Mammary epithelial cell (primary cell): ENCODE measurements at regions of chr3 and their contacts with region 1.

Region 1: GRCh38 chr3:185659942-185660921 is 74.1 kb downstream of the SENP2 start:
- DNase-seq: peak; percentile 62
- H3K4me3 ChIP-seq: no peak overlapping the region
- H3K27ac ChIP-seq: peak overlapping the region; percentile 48
- H3K4me1 ChIP-seq: peaks cover 60% of the 10 kb centered on the region
- H3K27me3 ChIP-seq: no peaks in the 10 kb centered on the region
- CTCF ChIP-seq: peak; percentile 98 to 99

Region 2: GRCh38 chr3:185089343-185089742 is 570.9 kb before region 1 on chr3:
- CTCF ChIA-PET with region 1: no interaction called
- dilution Hi-C with region 1: no loop called
- in situ Hi-C with region 1: no loop called
- intact Hi-C with region 1: no loop called
- DNase-seq: no peak
- H3K4me3 ChIP-seq: no peak overlapping the region
- H3K27ac ChIP-seq: no peak overlapping the region
- H3K4me1 ChIP-seq: no peaks in the 10 kb centered on the region
- H3K27me3 ChIP-seq: peaks cover 3% of the 10 kb centered on the region
- CTCF ChIP-seq: no peak

Region 3: DNA sequence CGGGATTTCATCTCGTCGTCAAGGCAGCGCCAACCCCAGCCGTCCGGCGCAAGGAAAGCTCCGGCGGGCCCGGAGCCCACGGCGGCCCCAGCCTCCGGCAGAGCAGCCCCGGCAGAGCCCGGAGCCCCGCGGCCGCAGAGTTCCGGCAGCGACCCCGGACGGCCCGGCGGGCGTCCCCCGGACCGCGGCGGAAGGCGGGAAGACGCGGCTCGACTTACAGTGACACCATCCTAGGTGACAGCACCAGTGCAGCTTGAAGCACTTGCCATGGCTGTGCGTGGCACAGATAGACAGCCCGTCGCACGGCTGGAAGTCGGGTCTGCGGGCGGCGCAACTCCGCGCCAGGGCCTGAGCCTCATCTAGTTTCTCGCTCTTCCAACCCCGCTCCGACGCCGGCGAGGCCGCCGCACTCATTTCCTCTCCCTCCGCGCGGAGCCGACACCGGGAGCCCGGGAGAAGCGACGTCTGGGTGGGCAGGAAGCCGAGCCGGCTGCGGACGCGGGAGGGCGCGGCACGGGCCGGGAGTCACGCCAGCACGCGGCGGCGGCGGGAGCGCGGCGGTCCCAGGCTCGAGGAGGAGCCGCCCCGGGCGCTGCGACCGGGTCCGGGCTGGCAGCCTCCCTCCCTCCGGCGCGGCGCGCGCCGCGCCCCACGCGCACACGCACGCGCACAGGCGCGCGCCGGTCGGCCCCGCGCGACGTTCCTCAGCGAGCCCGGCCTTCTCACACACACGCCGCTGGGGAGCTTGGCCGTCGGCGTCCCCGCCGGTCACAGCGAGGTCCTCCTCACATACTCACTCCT is 507.6 kb before region 1 on chr3 and contains the start of gene C3orf70:
- CTCF ChIA-PET with region 1: no interaction called
- dilution Hi-C with region 1: no loop called
- in situ Hi-C with region 1: no loop called
- intact Hi-C with region 1: no loop called
- DNase-seq: peak; percentile 25
- H3K4me3 ChIP-seq: peak within 1 kb of the TSS; percentile 18 to 58 (median 32)
- H3K27ac ChIP-seq: no peak within 1 kb of the TSS
- H3K4me1 ChIP-seq: peaks cover 11% of the 10 kb centered on the region
- H3K27me3 ChIP-seq: peaks cover 50% of the 10 kb centered on the region
- CTCF ChIP-seq: no peak
- total RNA-seq, gene C3orf70: under 0.01 to 0.05 TPM

Region 4: GRCh38 chr3:185613016-185613415 is 47.2 kb before region 1 on chr3:
- CTCF ChIA-PET with region 1: no interaction called
- dilution Hi-C with region 1: no loop called
- in situ Hi-C with region 1: no loop called
- intact Hi-C with region 1: no loop called
- DNase-seq: no peak
- H3K4me3 ChIP-seq: no peak overlapping the region
- H3K27ac ChIP-seq: no peak overlapping the region
- H3K4me1 ChIP-seq: no peaks in the 10 kb centered on the region
- H3K27me3 ChIP-seq: no peaks in the 10 kb centered on the region
- CTCF ChIP-seq: no peak

Region 5: DNA sequence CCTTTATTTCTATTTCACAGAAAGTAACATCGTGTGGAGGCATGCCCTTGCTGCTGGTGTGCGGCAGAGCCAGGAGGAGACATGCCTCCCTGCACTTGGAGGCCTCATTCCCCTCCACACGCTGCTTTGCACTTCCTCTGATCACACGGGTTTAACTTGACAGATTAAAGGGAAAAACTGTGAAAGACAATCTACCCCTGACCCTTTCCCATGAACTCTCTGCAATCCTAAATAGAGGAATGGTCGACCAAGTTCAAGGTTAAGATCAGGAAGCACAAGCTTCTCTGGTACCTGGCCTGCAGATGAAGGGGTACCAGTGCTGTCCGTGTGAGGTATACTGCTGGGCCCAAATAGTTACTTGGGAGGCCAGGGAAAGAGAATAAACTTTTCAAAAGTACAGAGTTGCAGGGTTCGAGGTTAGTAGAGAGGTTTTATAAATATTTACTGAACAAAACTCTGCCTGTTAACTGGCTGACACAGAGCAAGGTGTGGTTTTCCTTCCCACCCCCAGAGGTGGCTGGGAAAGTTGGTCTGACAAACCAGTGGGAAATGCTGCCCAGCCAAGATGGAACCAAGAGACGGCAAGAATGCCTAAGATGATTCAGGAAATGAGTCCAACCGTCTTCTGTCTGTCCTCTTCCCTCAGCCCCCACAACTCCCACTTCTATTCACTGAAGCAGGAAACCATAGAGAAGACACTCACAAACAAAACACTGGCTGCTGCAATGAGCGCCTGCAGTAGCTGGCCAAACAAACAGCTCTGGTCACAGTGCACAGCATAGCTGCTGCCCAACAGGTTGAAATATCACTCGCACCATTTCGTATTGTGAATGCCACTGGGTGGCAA is 85.0 kb after region 1 on chr3:
- CTCF ChIA-PET with region 1: no interaction called
- dilution Hi-C with region 1: no loop called
- in situ Hi-C with region 1: no loop called
- intact Hi-C with region 1: no loop called
- DNase-seq: peak; percentile 96
- H3K4me3 ChIP-seq: no peak overlapping the region
- H3K27ac ChIP-seq: peak overlapping the region; percentile 91
- H3K4me1 ChIP-seq: peaks cover 38% of the 10 kb centered on the region
- H3K27me3 ChIP-seq: no peaks in the 10 kb centered on the region
- CTCF ChIP-seq: peak in 1 of 2 donors; percentile 1

Region 6: DNA sequence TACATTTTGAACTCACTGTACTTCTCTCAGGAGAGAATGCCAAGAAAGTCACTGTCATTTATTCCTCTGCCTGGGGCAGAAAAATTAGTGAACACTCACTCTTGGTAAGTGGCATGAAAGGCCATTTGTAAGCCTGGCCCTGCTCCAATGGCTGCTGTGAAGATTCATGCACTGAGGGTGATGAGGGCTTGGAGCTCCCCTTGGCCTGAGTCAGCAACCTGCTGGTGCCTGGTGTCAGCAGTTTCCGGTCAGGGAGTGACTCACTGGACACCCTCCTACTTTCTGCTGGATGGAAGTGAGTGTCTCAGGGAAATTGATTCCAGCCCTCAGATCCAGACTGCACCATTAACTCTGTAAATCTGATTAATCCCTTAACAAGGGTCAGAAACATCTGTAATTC is 240.0 kb after region 1 on chr3:
- CTCF ChIA-PET with region 1: no interaction called
- dilution Hi-C with region 1: no loop called
- in situ Hi-C with region 1: loop called in 1 of 2 experiments (anchors 25 kb)
- intact Hi-C with region 1: loop called (anchors 1 kb)
- DNase-seq: peak; percentile 98
- H3K4me3 ChIP-seq: no peak overlapping the region
- H3K27ac ChIP-seq: no peak overlapping the region
- H3K4me1 ChIP-seq: peaks cover 10% of the 10 kb centered on the region
- H3K27me3 ChIP-seq: no peaks in the 10 kb centered on the region
- CTCF ChIP-seq: no peak

Region 7: DNA sequence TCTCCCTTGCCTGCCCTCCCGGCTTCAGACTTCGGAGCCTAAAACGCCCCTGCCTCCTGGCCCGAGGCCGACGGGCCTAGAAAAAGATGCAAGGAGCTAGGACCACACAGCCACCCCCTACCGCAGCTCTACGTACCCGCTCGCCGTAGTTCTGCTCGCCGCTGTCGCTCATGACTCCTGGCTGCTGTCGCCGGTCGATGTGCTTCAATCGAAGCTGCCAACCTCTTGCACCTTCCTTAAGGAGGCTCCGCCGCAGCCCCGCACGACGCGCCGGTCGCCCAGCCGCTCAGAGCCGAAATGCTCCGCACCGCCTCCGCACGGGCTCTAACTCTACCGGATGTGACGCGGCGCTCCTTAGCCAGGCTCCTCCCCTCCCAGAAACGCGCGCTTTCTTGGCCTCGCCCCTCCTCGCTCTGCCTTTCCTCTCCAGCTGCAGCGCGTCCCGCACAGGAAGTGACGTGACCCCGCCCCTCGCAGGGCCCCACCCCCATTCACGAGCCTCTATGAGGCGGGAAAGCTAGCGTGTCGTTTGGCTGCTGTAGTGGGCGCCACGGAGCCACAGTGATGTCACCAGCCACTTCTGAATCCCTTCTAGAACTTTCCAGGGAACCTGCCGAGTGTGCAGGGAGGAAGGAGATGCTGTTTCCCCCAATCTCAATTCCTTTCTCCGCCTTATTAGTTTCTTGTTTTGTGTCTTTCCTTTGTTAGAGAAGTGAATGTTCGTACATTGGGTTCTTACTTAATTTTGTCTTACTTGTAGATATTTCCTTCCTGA is 277.6 kb after region 1 on chr3 and contains the start of gene TRA2B:
- CTCF ChIA-PET with region 1: no interaction called
- dilution Hi-C with region 1: no loop called
- in situ Hi-C with region 1: no loop called
- intact Hi-C with region 1: loop called (anchors 5 kb)
- DNase-seq: peak; percentile 95
- H3K4me3 ChIP-seq: peak within 1 kb of the TSS; percentile 87 to 100 (median 98)
- H3K27ac ChIP-seq: peak within 1 kb of the TSS; percentile 99
- H3K4me1 ChIP-seq: peaks cover 18% of the 10 kb centered on the region
- H3K27me3 ChIP-seq: no peaks in the 10 kb centered on the region
- CTCF ChIP-seq: no peak
- total RNA-seq, gene TRA2B: 117 to 151 TPM